ENCODE measurements at regions of chr9 and their contacts with region 1.

Region 1: GRCh38 chr9:135343837-135344522 is 135.6 kb upstream of the PPP1R26 start:
- DNase-seq: no peak
- H3K4me3 ChIP-seq: no peak overlapping the region
- H3K27ac ChIP-seq: no peak overlapping the region
- H3K4me1 ChIP-seq: peaks cover 7% of the 10 kb centered on the region
- H3K27me3 ChIP-seq: no peaks in the 10 kb centered on the region
- CTCF ChIP-seq: peak; percentile 34 to 82 (median 56)
- POLR2A ChIP-seq: no peak

Region 2: DNA sequence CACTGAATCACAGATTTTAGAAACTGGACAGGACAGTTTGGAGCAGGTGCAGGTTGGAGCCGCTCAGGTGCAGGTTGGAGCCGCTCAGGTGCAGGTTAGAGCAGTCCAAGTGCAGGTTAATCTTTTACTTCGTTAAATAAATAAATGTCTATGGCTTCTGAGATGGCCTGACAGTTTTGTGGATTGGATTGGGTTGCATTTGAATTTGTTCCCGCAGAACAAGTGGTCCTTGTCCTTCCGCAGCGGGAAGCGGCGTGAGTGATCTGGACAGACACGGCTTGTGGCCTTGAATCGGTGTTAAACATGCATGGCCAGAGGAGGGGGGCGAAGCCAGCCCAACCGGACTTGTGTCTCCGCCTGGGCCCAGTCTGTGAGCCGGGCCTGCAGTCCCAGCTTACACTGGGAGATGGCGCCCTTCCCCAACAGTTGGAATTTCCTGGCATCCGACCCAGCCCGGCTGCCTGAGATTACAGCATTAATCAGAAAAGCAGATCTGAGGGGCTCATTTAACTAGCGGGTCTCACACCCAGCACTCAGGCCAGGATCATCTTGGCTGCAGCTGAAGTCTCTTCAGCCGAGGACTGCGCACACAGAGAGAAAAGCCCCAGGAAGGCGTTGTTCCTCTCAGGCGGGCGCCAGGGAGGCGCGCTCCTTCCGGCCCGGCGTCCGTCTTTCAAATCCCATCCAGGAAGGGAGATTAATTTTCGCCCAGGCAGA is 258.0 kb before region 1 on chr9:
- intact Hi-C with region 1: loop called (anchors 2 kb)
- DNase-seq: no peak
- H3K4me3 ChIP-seq: peak overlapping the region; percentile 45 to 64
- H3K27ac ChIP-seq: peak overlapping the region; percentile 29
- H3K4me1 ChIP-seq: peaks cover 32% of the 10 kb centered on the region
- H3K27me3 ChIP-seq: peaks cover 3% of the 10 kb centered on the region
- CTCF ChIP-seq: peak; percentile 89 to 91 (median 89)
- POLR2A ChIP-seq: no peak

Region 3: GRCh38 chr9:135281791-135282731 is 61.9 kb before region 1 on chr9:
- intact Hi-C with region 1: no loop called
- DNase-seq: no peak
- H3K4me3 ChIP-seq: no peak overlapping the region
- H3K27ac ChIP-seq: no peak overlapping the region
- H3K4me1 ChIP-seq: peaks cover 14% of the 10 kb centered on the region
- H3K27me3 ChIP-seq: no peaks in the 10 kb centered on the region
- CTCF ChIP-seq: no peak
- POLR2A ChIP-seq: no peak